ENCODE measurements at regions of chr15 and their contacts with region 1.

Region 1: DNA sequence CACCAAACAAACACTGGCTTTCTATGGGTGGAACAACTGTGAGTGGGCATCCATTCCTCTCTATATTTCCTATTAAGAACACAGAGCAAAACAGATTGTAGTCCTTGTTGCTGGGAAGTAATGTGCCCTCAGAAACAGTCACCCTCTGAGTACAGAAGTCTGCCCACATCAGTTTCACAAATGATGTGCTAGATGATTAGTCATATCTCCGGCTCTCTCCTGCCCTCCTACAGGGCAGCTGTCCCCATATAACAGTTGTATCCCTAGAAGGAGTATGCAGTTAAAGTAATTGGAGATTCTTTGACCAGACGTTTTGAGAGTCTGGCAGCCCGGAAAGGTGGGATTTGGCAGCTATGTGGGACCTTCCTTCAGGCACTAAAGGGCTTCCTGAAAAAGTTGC is 159.9 kb downstream of the APBA2 start:
- DNase-seq: no peak
- H3K4me3 Mint-ChIP-seq: no peak overlapping the region
- H3K27ac Mint-ChIP-seq: no peak overlapping the region
- H3K4me1 Mint-ChIP-seq: peaks cover 7% of the 10 kb centered on the region
- H3K27me3 Mint-ChIP-seq: no peaks in the 10 kb centered on the region

Region 2: GRCh38 chr15:28994831-28995596 is 50.7 kb before region 1 on chr15:
- intact Hi-C with region 1: loop called (anchors 10 kb)
- DNase-seq: no peak
- H3K4me3 Mint-ChIP-seq: no peak overlapping the region
- H3K27ac Mint-ChIP-seq: no peak overlapping the region
- H3K4me1 Mint-ChIP-seq: peaks cover 7% of the 10 kb centered on the region
- H3K27me3 Mint-ChIP-seq: no peaks in the 10 kb centered on the region

Measured in activated CD4-positive, alpha-beta T cell treated with anti-CD3 and anti-CD28 coated beads, Interleukin-2, amount 10 ng/mL, durations not matched to agents 24 days and 14 days (primary cell).